Activated T-helper 2 cell treated with anti-CD3 and anti-CD28 coated beads, Interferon-gamma antibody, Interleukin-2, Interleukin-4, amounts not matched to agents 10 μg/mL and 5 μg/mL and 100 μg/mL, durations not matched to agents 14 hours and 24 hours and 36 hours (primary cell): ENCODE measurements at regions of chr2 and their contacts with region 1.

Region 1: DNA sequence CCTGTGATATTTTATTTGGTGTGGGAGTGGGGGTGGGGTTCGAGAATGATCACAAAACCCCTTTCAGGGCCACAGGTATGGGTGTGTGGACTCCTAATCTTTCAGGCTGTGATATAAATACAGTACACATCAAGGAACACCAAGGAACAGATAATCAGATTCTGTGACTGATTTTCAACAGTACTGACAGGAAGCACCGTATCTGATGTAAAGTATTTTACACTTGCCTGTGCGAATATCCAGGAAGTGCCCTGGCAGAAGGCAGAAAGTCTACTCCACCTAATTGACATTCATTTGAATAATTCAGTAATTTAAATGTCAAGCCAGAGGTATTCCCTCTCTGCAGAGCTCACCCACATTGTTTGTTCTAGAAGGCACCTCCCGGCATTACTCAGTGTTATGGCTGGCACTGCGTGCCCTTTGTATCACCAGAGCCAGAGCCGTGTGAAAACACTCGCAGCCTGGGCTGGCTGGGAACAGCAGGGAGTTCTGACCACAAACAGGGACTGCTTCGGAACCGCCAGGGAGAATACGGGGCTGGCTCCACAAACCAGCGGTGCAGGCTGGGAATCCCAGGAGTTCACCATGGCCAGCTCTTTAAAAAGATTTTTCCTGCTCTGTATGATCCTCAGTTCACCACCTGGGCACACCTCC is 91.8 kb downstream of the ACVR1 start:
- DNase-seq: no peak
- H3K4me3 Mint-ChIP-seq: no peak overlapping the region
- H3K27ac Mint-ChIP-seq: peak overlapping the region; percentile 74
- H3K4me1 Mint-ChIP-seq: peaks cover 69% of the 10 kb centered on the region
- H3K27me3 Mint-ChIP-seq: no peaks in the 10 kb centered on the region

Region 2: DNA sequence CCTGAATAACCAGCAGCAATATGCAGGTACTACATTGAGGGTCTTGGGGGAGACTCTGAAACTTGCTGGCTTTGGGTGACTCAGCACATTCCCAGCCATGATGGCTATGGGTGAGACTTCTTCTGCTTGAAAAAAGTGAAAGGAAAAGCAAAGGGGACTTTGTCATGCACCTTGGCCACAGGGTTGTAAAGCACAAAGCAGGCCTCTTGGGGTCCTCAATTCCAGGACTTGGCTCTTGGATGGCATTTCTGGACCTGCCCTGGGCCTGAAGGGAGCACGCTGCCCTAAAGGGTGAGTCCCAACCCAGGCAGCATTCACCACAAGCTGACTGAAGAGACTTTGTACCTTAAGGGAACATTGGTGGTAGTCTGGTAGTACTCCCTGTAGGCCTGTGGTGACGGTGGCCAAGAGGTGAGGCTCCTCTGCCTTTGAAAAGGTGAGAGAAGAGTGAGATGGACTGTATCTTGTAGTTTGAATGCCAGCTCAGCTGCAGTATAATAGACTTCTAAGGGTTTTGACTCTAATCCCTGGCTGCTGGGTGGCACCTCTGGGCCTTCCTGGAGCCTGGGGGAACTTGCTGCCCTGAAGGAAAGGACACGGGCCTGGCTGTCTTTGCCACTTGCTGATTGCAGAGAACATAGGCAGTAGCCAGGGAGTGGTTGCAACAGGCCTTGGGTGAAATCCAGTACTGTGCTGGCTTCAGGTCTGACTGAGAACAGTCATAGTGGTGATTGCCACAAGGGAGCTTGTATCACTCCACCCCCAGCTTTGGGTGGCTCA is 303.9 kb before region 1 on chr2:
- intact Hi-C with region 1: loop called (anchors 5 kb)
- DNase-seq: no peak
- H3K4me3 Mint-ChIP-seq: peak overlapping the region; percentile 68
- H3K27ac Mint-ChIP-seq: peak overlapping the region; percentile 91
- H3K4me1 Mint-ChIP-seq: peaks cover 70% of the 10 kb centered on the region
- H3K27me3 Mint-ChIP-seq: no peaks in the 10 kb centered on the region

Region 3: GRCh38 chr2:157751462-157752058 is 32.7 kb before region 1 on chr2:
- intact Hi-C with region 1: loop called (anchors 5 kb)
- DNase-seq: no peak
- H3K4me3 Mint-ChIP-seq: no peak overlapping the region
- H3K27ac Mint-ChIP-seq: no peak overlapping the region
- H3K4me1 Mint-ChIP-seq: peaks cover 30% of the 10 kb centered on the region
- H3K27me3 Mint-ChIP-seq: no peaks in the 10 kb centered on the region

Region 4: GRCh38 chr2:157803952-157804351 is 19.7 kb after region 1 on chr2:
- intact Hi-C with region 1: loop called (anchors 1 kb)
- DNase-seq: no peak
- H3K4me3 Mint-ChIP-seq: no peak overlapping the region
- H3K27ac Mint-ChIP-seq: no peak overlapping the region
- H3K4me1 Mint-ChIP-seq: peaks cover 43% of the 10 kb centered on the region
- H3K27me3 Mint-ChIP-seq: no peaks in the 10 kb centered on the region

Region 5: DNA sequence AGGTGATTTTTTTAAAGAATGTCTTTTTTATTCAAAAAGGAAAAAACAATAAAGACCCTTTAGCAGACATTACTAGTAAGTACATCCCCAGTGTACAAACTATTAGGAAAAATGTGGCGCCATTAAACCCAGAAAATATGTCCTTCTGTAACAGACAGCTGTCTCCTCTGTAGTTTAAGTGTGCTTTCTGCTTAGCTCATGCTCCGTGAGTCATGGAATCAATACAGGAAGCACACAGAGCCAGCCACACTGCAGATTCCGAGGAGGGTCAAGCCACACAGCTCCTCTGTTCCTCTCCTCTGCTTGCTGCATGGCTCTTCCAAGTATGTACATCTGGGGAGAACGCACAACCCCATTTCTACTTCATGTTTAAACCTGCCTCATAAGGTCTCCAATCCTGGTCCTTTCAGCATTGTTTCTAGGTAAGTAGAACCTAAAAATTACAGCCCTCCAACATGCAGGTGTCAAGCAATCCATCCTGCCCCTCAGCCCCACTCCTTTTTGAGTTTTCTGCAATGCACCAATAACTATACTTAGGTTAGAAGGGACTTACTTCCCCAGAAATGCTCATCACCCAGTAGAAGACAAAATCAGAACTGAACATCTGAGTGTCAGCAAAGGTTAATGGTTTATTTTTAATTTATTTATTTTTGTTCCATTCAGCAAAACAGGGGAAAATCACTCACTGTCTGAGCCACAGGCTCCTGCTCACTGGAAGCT is 54.3 kb after region 1 on chr2:
- intact Hi-C with region 1: loop called (anchors 5 kb)
- DNase-seq: peak; percentile 11
- H3K4me3 Mint-ChIP-seq: no peak overlapping the region
- H3K27ac Mint-ChIP-seq: peak overlapping the region; percentile 53
- H3K4me1 Mint-ChIP-seq: peaks cover 39% of the 10 kb centered on the region
- H3K27me3 Mint-ChIP-seq: no peaks in the 10 kb centered on the region

Region 6: GRCh38 chr2:157876066-157876787 is 91.9 kb after region 1 on chr2 and contains the start of gene ACVR1:
- intact Hi-C with region 1: loop called (anchors 1 kb)
- DNase-seq: peak; percentile 83
- H3K4me3 Mint-ChIP-seq: peak within 1 kb of the TSS; percentile 85
- H3K27ac Mint-ChIP-seq: peak within 1 kb of the TSS; percentile 86
- H3K4me1 Mint-ChIP-seq: peaks cover 62% of the 10 kb centered on the region
- H3K27me3 Mint-ChIP-seq: no peaks in the 10 kb centered on the region
- total RNA-seq, gene ACVR1: 26.7 and 27.1 TPM in 2 replicates

Region 7: DNA sequence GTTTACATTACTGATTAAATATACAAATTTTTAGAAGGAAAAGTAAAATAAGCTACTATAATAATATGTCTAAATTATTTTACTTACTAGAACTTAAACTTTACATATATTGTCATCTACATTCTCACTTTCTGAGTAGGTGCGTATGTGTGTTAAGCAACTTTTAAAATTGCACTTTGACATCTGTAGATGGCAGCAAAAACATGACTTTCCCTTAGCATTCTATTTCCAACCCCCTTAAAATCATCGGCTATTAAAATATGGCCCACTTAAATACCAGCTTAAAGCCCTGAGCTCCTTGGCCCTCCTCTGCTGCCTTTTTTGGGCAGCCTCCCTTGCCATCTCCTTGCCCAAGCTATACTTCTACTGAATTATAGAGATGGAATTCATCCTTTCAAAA is 395.4 kb after region 1 on chr2:
- intact Hi-C with region 1: no loop called
- DNase-seq: no peak
- H3K4me3 Mint-ChIP-seq: no peak overlapping the region
- H3K27ac Mint-ChIP-seq: no peak overlapping the region
- H3K4me1 Mint-ChIP-seq: no peaks in the 10 kb centered on the region
- H3K27me3 Mint-ChIP-seq: peaks cover 37% of the 10 kb centered on the region